Activated CD4-positive, alpha-beta T cell treated with anti-CD3 and anti-CD28 coated beads for 36 hours (primary cell): ENCODE measurements at regions of chr16 and their contacts with region 1.

Region 1: DNA sequence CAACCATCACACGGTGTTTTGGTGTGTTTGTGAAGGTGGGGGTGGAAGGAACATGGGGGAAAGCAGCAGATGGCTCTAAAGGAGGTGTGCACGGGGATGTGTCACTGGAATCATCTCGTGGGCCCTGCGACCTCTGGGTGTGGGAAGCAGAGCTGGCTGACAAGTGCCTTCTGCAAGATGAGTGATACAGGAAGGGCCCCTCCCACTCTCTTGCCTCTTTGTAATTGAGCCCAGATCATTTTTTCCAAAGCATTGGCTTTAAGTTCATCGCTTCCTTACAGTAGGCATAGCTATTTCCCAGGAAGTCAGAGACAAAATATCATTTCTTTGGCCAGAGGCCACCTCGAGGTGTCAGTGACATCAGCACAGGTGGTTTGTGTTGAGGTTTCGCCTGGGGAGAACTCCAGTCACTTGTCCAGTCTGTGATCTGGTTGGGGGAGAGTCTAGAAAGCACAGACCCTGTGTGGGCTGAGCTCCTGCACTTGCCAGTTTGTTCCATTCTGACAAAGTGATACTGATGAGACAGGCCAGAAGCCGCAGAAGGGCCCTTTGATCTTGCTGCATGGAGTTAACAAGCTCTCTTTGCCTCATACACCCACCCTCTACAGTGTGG is 20.6 kb upstream of the SNTB2 start:
- DNase-seq: peak; percentile 91
- ATAC-seq: peak; percentile 92
- H3K4me3 Mint-ChIP-seq: peak overlapping the region; percentile 32
- H3K27ac Mint-ChIP-seq: peak overlapping the region; percentile 87
- H3K4me1 Mint-ChIP-seq: peaks cover 52% of the 10 kb centered on the region
- H3K27me3 Mint-ChIP-seq: no peaks in the 10 kb centered on the region

Region 2: GRCh38 chr16:68660359-68660795 is 505.9 kb before region 1 on chr16:
- CTCF ChIA-PET with region 1: no interaction called
- POLR2A ChIA-PET with region 1: no interaction called
- intact Hi-C with region 1: loop called in 1 of 2 experiments (anchors 1 kb)
- DNase-seq: no peak
- ATAC-seq: peak; percentile 65
- H3K4me3 Mint-ChIP-seq: no peak overlapping the region
- H3K27ac Mint-ChIP-seq: no peak overlapping the region
- H3K4me1 Mint-ChIP-seq: peaks cover 9% of the 10 kb centered on the region
- H3K27me3 Mint-ChIP-seq: peaks cover 23% of the 10 kb centered on the region

Region 3: DNA sequence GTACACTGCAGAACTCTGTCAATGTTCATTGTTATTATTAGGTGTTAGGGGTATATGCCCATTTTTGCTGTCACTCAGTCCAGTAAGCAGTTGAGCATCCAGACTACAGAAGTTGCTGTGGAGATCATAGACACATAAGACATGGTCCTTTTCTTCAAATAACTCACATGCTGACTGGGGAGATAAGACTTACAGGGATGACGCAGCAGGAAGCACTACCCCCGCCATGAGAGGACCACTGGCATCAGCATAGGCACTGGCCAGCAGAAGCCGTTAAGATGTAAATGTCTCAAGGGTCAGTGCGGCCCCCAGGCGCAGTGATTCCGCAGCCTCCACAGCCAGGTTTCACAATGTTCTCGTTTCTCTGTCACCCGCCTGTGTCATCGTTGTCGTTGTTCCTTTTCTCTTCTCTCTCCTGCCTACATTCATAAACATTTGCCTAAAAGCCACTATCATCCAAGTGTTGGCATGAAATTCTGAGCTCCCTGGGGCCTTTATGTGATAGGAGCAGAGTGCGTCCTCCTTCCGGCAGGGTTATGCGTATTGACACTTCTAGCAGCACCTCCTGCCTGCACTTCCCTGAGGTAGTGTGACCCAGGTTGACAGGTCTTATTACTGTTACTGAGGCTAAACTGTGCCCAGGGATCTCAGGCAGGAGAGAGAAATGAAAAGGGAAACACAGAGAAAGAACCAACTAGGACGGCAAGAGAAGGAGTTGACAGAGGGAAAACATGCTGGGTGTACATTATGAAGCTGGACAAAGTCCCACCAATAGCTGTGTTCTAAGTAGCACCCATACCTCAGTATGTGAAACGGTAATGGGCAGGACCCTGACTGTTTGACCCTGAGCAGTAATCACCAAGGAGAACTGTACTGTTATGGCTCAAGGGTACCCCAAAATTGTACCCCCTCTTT is 305.1 kb before region 1 on chr16:
- CTCF ChIA-PET with region 1: no interaction called
- POLR2A ChIA-PET with region 1: no interaction called
- intact Hi-C with region 1: no loop called
- DNase-seq: no peak
- ATAC-seq: no peak
- H3K4me3 Mint-ChIP-seq: no peak overlapping the region
- H3K27ac Mint-ChIP-seq: no peak overlapping the region
- H3K4me1 Mint-ChIP-seq: no peaks in the 10 kb centered on the region
- H3K27me3 Mint-ChIP-seq: no peaks in the 10 kb centered on the region

Region 4: DNA sequence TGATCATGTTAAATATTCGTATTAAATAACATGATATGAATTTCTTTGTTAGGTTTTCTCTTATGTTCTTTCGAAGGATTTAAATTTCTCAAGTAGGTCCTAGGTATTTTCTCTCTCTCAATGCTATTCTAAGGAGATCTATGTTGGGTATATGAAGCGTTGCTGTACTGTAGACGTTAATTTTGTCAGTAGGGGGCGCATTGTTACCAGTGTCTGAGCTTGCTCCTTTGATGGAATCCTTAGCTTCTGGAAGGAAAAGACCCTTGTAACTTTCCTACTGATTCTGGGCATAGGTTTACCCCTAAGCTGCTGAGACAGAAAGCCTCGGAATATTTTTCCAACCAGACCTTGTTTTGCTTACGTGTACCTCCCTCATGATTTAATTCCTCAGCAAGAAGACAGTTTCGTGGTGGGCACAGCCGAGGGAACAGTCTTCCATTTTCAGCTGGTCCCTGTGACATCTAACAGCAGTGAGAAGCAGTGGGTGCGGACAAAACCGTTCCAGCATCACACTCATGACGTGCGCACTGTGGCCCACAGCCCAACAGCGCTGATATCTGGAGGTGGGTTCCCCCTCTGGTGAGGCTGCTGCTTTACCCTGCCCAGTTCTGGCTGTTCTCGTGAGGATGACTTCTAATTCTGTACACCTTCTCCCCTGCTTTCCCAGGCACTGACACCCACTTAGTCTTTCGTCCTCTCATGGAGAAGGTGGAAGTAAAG is 16.0 kb before region 1 on chr16:
- CTCF ChIA-PET with region 1: interaction called, 13 read pairs
- POLR2A ChIA-PET with region 1: interaction called, 3 read pairs
- intact Hi-C with region 1: no loop called
- DNase-seq: peak; percentile 60
- ATAC-seq: peak; percentile 78
- H3K4me3 Mint-ChIP-seq: no peak overlapping the region
- H3K27ac Mint-ChIP-seq: no peak overlapping the region
- H3K4me1 Mint-ChIP-seq: no peaks in the 10 kb centered on the region
- H3K27me3 Mint-ChIP-seq: no peaks in the 10 kb centered on the region

Region 5: GRCh38 chr16:69204172-69204571 is 37.8 kb after region 1 on chr16:
- CTCF ChIA-PET with region 1: interaction called, 3 read pairs
- POLR2A ChIA-PET with region 1: no interaction called
- intact Hi-C with region 1: loop called (anchors 1 kb)
- DNase-seq: no peak
- ATAC-seq: peak; percentile 11
- H3K4me3 Mint-ChIP-seq: no peak overlapping the region
- H3K27ac Mint-ChIP-seq: peak overlapping the region; percentile 55
- H3K4me1 Mint-ChIP-seq: peaks cover 26% of the 10 kb centered on the region
- H3K27me3 Mint-ChIP-seq: no peaks in the 10 kb centered on the region

Region 6: GRCh38 chr16:69535123-69536050 is 369.1 kb after region 1 on chr16:
- CTCF ChIA-PET with region 1: no interaction called
- POLR2A ChIA-PET with region 1: no interaction called
- intact Hi-C with region 1: loop called in 1 of 2 experiments (anchors 1 kb)
- DNase-seq: no peak
- ATAC-seq: no peak
- H3K4me3 Mint-ChIP-seq: no peak overlapping the region
- H3K27ac Mint-ChIP-seq: no peak overlapping the region
- H3K4me1 Mint-ChIP-seq: peaks cover 21% of the 10 kb centered on the region
- H3K27me3 Mint-ChIP-seq: peaks cover 1% of the 10 kb centered on the region